PC-9 (cell line): ENCODE measurements at regions of chr1 and their contacts with region 1.

Region 1: DNA sequence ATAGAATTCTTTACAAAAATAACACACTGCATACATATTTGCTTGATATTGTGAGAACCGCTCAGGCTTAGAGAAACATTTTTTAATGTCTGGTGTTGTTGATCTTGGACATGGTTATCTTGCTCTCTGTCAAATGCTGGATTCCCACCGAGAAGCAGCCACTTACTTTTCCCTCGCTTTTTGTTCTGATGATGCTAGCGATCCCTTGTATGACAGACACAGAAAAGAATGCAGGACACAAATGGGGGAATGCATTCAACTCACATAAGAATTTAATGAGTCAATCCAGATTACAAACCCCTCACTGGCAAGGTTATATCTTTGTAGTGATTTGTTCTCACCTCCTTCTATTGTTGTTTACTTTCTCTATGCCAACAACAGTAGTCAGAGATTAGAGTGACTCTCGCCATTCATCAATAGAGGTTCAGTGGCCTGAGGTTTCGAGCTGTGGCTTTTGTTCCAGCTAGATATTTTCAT is 76.8 kb upstream of the AKT3 start:
- DNase-seq: peak; percentile 56 to 100
- H3K4me3 ChIP-seq: no peak overlapping the region
- H3K27ac ChIP-seq: peak overlapping the region; percentile 97
- H3K4me1 ChIP-seq: peaks cover 67% of the 10 kb centered on the region
- H3K27me3 ChIP-seq: no peaks in the 10 kb centered on the region
- CTCF ChIP-seq: no peak

Region 2: GRCh38 chr1:243713470-243714186 is 213.2 kb before region 1 on chr1:
- CTCF ChIA-PET with region 1: interaction called, 4 read pairs
- POLR2A ChIA-PET with region 1: interaction called, 12 read pairs
- intact Hi-C with region 1: loop called (anchors 10 kb)
- DNase-seq: no peak
- H3K4me3 ChIP-seq: no peak overlapping the region
- H3K27ac ChIP-seq: no peak overlapping the region
- H3K4me1 ChIP-seq: peaks cover 4% of the 10 kb centered on the region
- H3K27me3 ChIP-seq: no peaks in the 10 kb centered on the region
- CTCF ChIP-seq: no peak

Region 3: GRCh38 chr1:243751506-243751905 is 175.3 kb before region 1 on chr1:
- CTCF ChIA-PET with region 1: no interaction called
- POLR2A ChIA-PET with region 1: no interaction called
- intact Hi-C with region 1: no loop called
- DNase-seq: no peak
- H3K4me3 ChIP-seq: no peak overlapping the region
- H3K27ac ChIP-seq: no peak overlapping the region
- H3K4me1 ChIP-seq: peaks cover 4% of the 10 kb centered on the region
- H3K27me3 ChIP-seq: no peaks in the 10 kb centered on the region
- CTCF ChIP-seq: no peak

Region 4: DNA sequence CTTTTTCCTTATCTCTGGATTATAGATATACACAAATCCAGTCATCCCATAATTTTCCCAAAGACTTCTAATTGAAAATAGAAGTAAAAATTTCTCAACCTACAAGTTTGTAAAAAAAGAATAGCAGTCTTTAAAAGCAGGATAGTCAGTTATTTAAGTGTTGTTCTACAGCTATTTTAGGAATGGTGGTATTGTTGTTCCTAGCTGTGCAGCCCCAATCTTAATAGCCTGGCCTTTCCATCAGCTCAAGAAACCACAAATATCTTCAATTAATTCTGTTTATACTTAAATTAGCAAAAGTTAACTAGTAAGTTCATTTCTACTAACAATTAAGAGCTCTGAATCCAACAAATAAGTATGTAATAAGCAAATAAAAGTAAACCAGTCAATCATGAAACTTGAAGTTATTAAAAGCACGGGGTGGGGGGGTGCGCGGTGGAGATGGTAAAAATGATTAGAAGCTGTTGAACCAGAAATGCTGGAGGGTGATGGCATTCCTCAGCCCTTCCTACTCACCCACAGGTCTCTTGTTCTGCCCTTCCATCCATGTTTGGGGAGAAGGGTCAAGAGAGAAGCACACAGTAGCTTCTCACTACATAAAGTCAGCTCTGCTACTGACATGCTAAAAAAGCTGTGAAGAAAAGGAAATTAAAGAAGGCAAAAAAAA is 140.4 kb before region 1 on chr1:
- CTCF ChIA-PET with region 1: no interaction called
- POLR2A ChIA-PET with region 1: interaction called, 3 read pairs
- intact Hi-C with region 1: loop called (anchors 5 kb)
- DNase-seq: peak; percentile 60 to 77
- H3K4me3 ChIP-seq: peak overlapping the region; percentile 17; the same call in 1 of the 2 replicates
- H3K27ac ChIP-seq: peak overlapping the region; percentile 57
- H3K4me1 ChIP-seq: peaks cover 30% of the 10 kb centered on the region
- H3K27me3 ChIP-seq: no peaks in the 10 kb centered on the region
- CTCF ChIP-seq: no peak

Region 5: GRCh38 chr1:243956450-243956849 is 29.6 kb after region 1 on chr1:
- CTCF ChIA-PET with region 1: no interaction called
- POLR2A ChIA-PET with region 1: no interaction called
- intact Hi-C with region 1: no loop called
- DNase-seq: no peak
- H3K4me3 ChIP-seq: no peak overlapping the region
- H3K27ac ChIP-seq: no peak overlapping the region
- H3K4me1 ChIP-seq: no peaks in the 10 kb centered on the region
- H3K27me3 ChIP-seq: no peaks in the 10 kb centered on the region
- CTCF ChIP-seq: no peak

Region 6: GRCh38 chr1:244163861-244164562 is 237.2 kb after region 1 on chr1:
- CTCF ChIA-PET with region 1: no interaction called
- POLR2A ChIA-PET with region 1: interaction called, 7 read pairs
- intact Hi-C with region 1: loop called (anchors 2 kb)
- DNase-seq: peak; percentile 76 to 100
- H3K4me3 ChIP-seq: peak overlapping the region; percentile 15; the same call in 1 of the 2 replicates
- H3K27ac ChIP-seq: peak overlapping the region; percentile 83
- H3K4me1 ChIP-seq: peaks cover 54% of the 10 kb centered on the region
- H3K27me3 ChIP-seq: no peaks in the 10 kb centered on the region
- CTCF ChIP-seq: no peak